Calu3 (cell line): ENCODE measurements at regions of chr12 and their contacts with region 1.

Region 1: DNA sequence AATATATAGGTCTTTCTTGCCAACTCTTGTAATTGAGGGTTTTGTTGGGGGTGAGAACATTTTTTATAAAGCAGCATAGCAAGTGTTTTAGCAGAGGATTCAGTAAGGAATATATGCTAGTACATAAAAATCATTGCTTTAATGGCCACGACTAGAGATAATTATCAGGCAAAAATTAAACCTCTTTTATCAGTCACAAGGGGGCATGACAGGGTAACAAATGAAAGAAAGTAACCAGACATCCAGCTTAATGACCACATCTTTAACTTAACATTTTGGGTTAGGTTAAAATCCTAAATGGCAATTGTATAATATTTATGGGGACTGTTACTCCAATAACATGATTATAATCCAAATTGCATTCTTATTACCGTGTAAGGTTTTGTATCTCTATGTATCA is 119.6 kb downstream of the LRRIQ1 start:
- DNase-seq: peak; percentile 5
- H3K4me3 Mint-ChIP-seq: no peak overlapping the region
- H3K27ac Mint-ChIP-seq: no peak overlapping the region
- H3K4me1 Mint-ChIP-seq: no peaks in the 10 kb centered on the region
- H3K27me3 Mint-ChIP-seq: no peaks in the 10 kb centered on the region
- CTCF ChIP-seq: peak; percentile 22

Region 2: DNA sequence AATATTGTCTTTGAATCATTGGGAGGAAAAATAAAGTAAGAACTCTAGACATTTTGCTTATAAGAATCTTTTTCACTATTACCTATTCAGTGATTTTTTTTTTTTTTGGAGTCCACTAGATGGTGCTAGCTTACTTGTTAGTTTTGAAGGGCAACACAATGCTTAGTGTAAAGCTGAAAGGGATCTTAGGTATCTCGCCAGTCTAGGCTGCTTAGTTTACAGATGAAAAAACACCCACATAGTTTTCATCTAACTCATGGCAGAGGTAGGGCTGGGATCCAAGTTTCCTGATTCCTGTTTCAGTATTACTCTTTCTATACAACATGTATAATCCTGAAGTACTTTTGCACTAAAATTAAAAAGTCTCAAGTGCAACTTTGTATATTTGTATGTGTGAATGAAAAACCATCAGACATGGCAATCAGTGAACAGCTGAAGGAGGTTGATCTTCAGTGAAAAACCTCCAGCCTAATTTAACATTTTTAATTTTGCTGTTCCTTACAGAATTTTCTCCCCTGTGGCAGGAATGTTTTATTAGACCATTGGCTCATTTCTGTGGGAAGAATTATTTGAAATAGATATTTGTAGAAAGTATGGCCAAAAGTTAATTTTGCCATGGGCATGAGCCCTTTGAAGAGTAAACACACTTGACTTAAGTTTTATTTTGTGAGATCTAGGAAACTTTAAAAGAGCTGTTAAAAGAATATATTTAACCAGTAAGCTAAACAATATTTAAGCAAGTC is 78.9 kb before region 1 on chr12:
- CTCF ChIA-PET with region 1: interaction called, 4 read pairs
- intact Hi-C with region 1: loop called (anchors 2 kb)
- DNase-seq: peak; percentile 57
- H3K4me3 Mint-ChIP-seq: no peak overlapping the region
- H3K27ac Mint-ChIP-seq: peak overlapping the region; percentile 77
- H3K4me1 Mint-ChIP-seq: peaks cover 9% of the 10 kb centered on the region
- H3K27me3 Mint-ChIP-seq: no peaks in the 10 kb centered on the region
- CTCF ChIP-seq: peak; percentile 30

Region 3: GRCh38 chr12:85280165-85280983 is 124.6 kb after region 1 on chr12 and contains the start of gene ALX1:
- CTCF ChIA-PET with region 1: interaction called, 3 read pairs
- intact Hi-C with region 1: loop called (anchors 5 kb)
- DNase-seq: peak; percentile 77
- H3K4me3 Mint-ChIP-seq: peak within 1 kb of the TSS; percentile 91
- H3K27ac Mint-ChIP-seq: peak within 1 kb of the TSS; percentile 94
- H3K4me1 Mint-ChIP-seq: no peaks in the 10 kb centered on the region
- H3K27me3 Mint-ChIP-seq: no peaks in the 10 kb centered on the region
- CTCF ChIP-seq: no peak
- total RNA-seq, gene ALX1: 2.5 and 2.9 TPM in 2 replicates

Region 4: DNA sequence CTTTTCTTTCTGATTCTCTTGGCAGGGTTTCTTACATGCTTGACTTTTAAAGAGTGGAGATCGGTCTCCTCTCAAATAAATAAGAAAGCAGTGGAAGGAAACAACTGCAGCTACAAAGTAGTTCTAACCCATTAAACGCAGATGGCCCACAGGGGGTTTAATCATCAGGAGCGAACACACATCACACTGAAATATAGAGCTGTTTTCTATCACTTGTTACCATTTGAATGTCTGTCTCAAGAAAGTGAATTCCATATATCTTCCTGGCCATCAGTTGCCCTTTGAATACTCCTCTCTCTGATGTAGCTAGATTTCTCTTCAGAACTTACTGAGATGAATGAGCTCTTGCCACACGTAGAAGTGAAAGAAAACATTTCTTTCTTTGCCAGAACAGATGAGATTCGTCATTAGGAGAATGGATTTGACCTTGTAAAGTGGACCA is 153.4 kb after region 1 on chr12:
- CTCF ChIA-PET with region 1: no interaction called
- intact Hi-C with region 1: loop called (anchors 5 kb)
- DNase-seq: no peak
- H3K4me3 Mint-ChIP-seq: no peak overlapping the region
- H3K27ac Mint-ChIP-seq: no peak overlapping the region
- H3K4me1 Mint-ChIP-seq: no peaks in the 10 kb centered on the region
- H3K27me3 Mint-ChIP-seq: no peaks in the 10 kb centered on the region
- CTCF ChIP-seq: no peak

Region 5: DNA sequence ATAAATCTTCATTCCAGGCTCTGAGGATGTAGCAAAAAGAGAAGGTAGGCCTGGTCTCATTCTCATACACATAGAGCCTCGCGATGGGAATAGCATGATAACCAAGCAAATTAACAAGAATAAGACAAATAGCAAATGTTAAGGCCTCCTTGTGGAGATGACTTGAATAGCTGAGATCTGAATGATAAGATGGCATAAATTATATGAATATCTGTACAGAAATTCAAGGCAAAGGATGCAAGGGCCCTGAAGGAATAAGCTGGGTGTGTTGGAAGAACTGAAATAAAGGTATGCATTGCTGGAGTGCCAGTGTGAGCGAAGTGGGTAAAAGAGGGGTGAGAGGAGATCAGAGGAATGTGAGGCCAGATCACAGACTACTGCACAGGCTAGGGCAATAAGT is 239.0 kb after region 1 on chr12:
- CTCF ChIA-PET with region 1: no interaction called
- intact Hi-C with region 1: loop called (anchors 5 kb)
- DNase-seq: no peak
- H3K4me3 Mint-ChIP-seq: no peak overlapping the region
- H3K27ac Mint-ChIP-seq: no peak overlapping the region
- H3K4me1 Mint-ChIP-seq: no peaks in the 10 kb centered on the region
- H3K27me3 Mint-ChIP-seq: no peaks in the 10 kb centered on the region
- CTCF ChIP-seq: no peak

Region 6: DNA sequence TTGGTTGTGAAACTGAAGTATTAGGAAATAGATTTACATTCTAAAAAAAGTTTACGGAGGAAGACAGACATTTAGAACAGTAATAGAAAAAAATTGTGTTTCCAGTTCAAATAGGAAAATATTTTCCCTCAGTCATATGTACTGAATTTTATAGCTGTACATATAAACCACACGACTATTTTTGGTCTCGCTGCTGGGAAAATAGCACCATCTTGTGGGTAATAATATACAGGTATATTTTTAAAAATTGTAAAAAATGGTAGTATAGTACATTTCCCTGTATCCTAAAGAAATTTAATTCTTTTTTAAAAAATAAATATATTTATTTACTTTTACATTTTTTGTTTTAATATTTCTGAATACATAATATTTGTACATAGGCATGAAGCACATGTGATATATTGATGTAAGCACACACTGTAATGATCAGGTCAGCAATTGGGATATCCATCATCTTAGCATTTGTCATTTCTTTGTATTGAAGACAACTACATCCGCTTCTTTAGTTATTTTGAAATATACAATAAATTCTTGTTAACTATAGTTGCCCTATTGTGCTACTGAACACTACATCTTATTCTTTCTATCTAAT is 292.9 kb after region 1 on chr12:
- CTCF ChIA-PET with region 1: interaction called, 11 read pairs
- intact Hi-C with region 1: loop called (anchors 1 kb)
- DNase-seq: no peak
- H3K4me3 Mint-ChIP-seq: no peak overlapping the region
- H3K27ac Mint-ChIP-seq: no peak overlapping the region
- H3K4me1 Mint-ChIP-seq: peaks cover 13% of the 10 kb centered on the region
- H3K27me3 Mint-ChIP-seq: no peaks in the 10 kb centered on the region
- CTCF ChIP-seq: peak; percentile 33

Region 7: DNA sequence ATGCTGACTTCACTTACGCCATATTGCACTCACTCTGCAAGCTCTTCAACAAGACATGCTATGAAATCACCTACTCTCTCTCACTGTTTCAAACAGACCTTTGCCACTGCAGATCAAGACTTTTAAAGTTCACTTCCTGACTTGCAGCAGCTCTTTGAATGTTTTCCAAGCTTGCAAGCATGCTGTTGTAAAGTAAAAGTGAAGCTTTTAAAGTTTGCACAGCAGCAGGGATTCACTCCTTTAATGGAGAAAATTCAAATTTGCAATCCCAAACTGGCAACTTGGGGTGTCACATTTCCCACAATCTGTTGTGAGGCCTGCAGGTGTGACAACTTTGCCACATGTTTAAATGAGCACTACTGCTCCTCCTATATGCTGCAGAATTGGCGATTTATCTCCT is 395.1 kb after region 1 on chr12:
- CTCF ChIA-PET with region 1: no interaction called
- intact Hi-C with region 1: no loop called
- DNase-seq: no peak
- H3K4me3 Mint-ChIP-seq: no peak overlapping the region
- H3K27ac Mint-ChIP-seq: no peak overlapping the region
- H3K4me1 Mint-ChIP-seq: no peaks in the 10 kb centered on the region
- H3K27me3 Mint-ChIP-seq: no peaks in the 10 kb centered on the region
- CTCF ChIP-seq: no peak

Region 8: DNA sequence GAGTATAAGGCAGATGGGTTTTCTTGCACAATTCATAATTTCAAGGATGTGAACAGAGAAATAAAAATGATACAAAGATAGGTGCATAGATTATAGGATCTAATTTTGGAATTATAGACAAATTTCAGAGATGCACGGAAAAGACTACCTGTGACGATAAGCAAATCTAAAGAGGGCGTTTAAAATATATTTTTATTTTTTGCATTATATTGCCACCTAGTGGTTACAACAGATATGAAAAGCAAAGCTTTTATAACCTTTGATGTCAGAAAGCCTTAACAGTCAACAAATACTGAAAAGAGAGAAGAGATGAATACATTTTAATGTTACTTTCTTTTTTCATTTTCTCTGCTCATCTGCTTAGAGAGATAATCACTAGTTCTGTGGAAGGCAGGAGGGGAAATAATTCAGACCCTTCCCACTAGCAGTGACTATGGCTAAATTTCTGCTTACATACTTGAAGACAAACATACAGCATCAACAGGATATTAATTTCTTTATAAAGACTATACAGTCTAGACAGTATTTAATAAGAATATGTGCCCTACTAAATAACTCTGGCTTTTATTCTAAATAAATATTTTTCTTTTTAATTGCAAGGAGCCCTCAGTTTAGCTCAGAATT is 764.6 kb after region 1 on chr12:
- CTCF ChIA-PET with region 1: no interaction called
- intact Hi-C with region 1: loop called (anchors 2 kb)
- DNase-seq: no peak
- H3K4me3 Mint-ChIP-seq: no peak overlapping the region
- H3K27ac Mint-ChIP-seq: no peak overlapping the region
- H3K4me1 Mint-ChIP-seq: no peaks in the 10 kb centered on the region
- H3K27me3 Mint-ChIP-seq: no peaks in the 10 kb centered on the region
- CTCF ChIP-seq: peak; percentile 45